ENCODE measurements at regions of chr2 and their contacts with region 1.

Region 1: GRCh38 chr2:106638043-106638442 is 150.9 kb downstream of the CD8B2 start:
- DNase-seq: no peak

Region 2: DNA sequence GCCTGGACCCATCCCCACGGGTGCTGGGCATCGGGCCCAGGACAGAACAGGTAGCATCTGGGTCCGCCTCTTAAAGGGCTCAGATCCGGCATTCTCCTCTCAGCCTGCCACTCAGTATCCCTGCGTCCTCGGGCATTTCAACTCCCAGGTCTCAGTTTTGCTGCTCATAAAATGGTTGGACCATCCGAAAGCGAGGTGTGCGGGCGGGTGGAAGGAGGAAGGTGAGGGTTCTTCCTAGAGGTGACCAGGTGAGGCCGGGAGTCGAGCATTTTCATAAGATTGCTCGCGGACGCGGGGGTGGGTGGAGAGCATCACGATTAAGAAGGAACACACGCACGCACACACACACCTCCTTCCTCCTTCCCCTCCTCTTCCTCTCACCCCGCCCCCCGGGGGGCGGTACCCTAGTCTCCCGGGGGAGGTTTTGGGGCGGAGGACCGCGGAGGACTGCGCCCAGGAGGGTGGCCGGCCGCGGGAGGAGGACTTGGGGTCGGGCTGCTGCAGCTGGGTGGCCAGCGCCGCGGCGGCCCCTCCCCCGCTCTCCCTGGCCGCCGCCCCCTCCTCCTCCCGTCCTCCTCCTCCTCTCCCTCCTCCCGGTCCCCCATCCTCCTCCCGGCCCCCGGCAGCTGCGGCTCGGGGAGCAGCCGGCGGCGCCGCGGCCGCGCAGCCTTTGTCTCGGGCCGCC is 1494.4 kb before region 1 on chr2:
- intact Hi-C with region 1: no loop called
- DNase-seq: no peak

Region 3: GRCh38 chr2:107012714-107013306 is 374.8 kb after region 1 on chr2:
- intact Hi-C with region 1: loop called in 1 of 2 experiments (anchors 5 kb)
- DNase-seq: no peak